Ovary (tissue), 10 donors: ENCODE measurements at regions of chr16 and their contacts with region 1.

Region 1: GRCh38 chr16:55842369-55843104 is 9.6 kb upstream of the CES1 start:
- DNase-seq: no peak
- H3K4me3 ChIP-seq: no peak overlapping the region
- H3K27ac ChIP-seq: no peak overlapping the region
- H3K4me1 ChIP-seq: no peaks in the 10 kb centered on the region
- H3K27me3 ChIP-seq: no peaks in the 10 kb centered on the region
- CTCF ChIP-seq: peak; percentile 16 to 54 (median 47)
- EP300 ChIP-seq: no peak
- POLR2A ChIP-seq: no peak

Region 2: DNA sequence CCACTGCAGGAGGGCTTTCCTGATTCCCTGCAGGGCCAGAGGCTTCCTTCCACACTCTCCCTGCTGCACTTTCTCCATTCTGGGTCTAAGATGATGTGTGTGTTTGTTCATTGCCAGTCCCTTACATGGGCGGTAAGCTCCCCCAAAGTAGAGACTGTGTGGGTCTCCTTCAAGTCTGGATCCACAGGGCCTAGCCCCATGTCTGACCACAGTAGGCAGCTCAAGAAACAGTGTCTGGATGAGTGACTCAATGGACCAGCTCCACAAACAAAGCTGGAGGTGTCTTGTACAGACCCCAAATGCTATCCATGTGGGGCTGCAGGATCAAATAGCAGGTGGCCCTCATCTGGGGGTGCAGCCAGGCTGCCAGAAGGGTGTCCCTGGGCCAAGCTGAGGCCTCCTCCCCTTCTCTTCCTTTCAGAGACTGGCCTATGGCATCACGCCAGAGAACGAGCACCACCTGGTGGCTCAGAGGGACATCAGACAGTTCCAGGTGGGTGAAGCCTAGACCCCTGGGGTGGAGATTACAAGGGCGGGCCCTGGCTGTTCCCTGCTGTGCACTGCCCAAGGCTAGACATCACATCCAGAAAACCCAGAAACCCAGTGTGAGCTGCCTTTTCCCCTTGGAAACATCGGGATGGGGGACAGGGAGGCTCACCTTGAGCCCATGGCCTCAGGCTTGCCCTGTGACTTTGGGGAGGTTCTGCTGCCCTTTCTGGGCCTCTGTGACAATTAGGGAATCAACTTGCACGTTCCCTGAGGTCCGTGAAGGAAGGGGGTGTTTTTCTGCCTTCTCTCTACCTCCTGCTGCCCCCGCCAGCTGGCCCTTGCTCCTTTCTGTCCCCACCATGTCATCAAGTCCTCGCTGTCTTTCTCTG is 140.9 kb before region 1 on chr16:
- intact Hi-C with region 1: loop called in 1 of 4 experiments (anchors 5 kb)
- DNase-seq: peak; percentile 30 to 56 (median 35)
- H3K4me3 ChIP-seq: no peak overlapping the region
- H3K27ac ChIP-seq: no peak overlapping the region
- H3K4me1 ChIP-seq: no peaks in the 10 kb centered on the region
- H3K27me3 ChIP-seq: no peaks in the 10 kb centered on the region
- CTCF ChIP-seq: no peak
- EP300 ChIP-seq: no peak
- POLR2A ChIP-seq: no peak

Region 3: DNA sequence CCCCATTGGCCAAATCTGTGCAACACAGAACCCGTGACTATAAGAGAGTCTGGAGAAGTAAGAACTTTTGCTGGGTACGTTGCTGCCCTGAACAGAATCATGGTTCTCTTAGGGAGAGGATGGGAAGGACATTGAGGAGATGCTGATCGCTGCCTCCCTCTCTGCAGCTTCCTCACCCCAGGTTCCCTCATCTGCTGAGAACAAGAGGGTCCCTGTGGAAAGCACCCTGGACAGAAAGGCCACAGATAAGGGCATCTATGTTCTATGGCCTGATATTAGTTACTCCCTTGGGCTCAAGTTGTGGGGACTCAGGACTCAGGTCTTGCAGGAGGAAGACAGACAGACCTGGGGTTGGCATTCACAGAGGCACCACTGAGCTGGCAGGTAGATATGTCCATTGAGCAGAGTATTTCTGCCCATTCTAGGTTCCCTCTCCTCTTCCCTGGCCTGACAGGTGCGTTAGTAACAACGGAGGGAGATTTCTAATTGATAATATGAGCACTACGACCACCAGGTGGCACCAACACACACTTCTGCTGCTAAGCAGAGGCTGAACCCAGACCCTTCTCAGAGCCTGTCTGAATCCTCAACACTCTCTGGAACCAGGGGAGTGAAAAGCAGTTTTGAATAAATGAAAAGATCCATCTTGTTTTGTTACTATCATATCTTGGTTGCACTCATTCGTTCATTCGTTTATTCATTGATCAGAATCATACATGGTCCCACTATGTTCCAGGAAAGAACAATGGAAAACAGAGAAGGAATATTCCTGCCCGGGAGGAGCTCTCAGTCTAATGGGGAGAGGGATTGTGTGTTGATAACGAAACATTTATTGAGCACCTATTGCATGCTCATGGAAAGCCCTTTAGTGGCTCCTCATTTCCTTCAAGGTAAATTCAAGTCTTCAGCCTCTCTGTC is 130.3 kb before region 1 on chr16:
- intact Hi-C with region 1: loop called in 2 of 4 experiments (anchors 5 to 10 kb)
- DNase-seq: peak; percentile 20 to 63 (median 50)
- H3K4me3 ChIP-seq: no peak overlapping the region
- H3K27ac ChIP-seq: no peak overlapping the region
- H3K4me1 ChIP-seq: no peaks in the 10 kb centered on the region
- H3K27me3 ChIP-seq: no peaks in the 10 kb centered on the region
- CTCF ChIP-seq: peak in 1 of 3 donors; percentile 12
- EP300 ChIP-seq: no peak
- POLR2A ChIP-seq: no peak